ENCODE measurements at regions of chr15 and their contacts with region 1.

Region 1: DNA sequence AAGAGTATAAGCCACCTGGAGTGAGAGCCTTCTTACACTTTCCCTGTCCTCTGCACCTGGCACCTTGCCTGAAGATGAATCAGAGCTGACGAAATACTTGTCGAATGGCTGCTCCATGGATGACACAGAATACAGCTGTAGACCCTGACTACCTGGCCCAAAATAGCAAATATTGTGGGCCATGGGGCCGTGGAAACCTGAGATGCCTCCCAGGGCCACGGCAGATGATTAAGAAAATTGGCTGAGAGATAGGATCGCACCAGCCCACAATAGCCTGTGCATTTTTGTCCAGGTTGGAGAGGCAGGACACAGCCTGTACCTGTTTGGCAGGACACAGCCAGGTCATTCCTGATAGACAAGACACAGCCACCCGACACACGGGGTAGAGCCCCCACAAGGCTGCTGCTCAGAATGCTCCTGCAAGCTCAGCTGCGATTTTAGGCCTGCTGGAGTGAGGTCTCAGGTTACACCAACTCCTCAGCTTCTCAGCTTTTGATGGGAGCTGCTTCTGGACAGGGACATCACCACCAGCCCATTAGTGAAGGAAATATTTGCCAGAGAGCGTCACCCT is 22.9 kb upstream of the TPM1 start:
- DNase-seq: peak; percentile 91 to 94
- H3K4me3 ChIP-seq: no peak overlapping the region; the same call in 1 of the 2 replicates
- H3K27ac ChIP-seq: peak overlapping the region; percentile 75
- H3K4me1 ChIP-seq: peaks cover 51% of the 10 kb centered on the region
- H3K27me3 ChIP-seq: no peaks in the 10 kb centered on the region
- CTCF ChIP-seq: no peak

Region 2: DNA sequence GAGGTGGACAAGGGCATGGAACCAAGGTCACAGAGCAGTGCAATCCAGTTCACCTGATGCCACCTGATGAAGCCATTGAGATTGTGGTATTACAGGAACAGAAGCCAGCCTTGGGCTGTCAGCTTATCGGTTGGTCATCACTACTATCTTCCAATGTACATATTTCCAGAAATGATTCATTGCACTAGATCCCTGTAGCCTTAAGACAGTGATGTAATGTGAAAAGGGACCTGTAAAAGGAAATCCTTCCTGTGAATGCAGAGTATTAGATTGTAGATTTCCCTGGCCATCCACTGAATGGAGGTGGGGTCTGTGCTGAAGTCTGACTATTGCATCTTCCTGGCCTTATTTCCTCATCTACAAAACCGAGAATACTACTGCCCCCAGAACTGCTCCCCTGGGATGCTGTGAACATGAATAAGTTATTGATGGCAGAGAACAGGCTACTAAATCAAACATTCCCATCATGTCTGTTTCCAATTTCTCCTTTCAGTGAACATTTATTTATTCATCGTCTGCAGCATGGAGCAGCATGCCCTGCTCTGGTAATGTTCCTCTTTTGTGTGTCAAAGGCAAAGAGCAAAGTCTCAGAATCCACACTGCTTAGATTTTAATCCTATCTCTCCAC is 24.5 kb before region 1 on chr15:
- CTCF ChIA-PET with region 1: no interaction called
- POLR2A ChIA-PET with region 1: interaction called, 7 read pairs
- intact Hi-C with region 1: loop called (anchors 1 kb)
- DNase-seq: peak in 1 of 2 experiments; percentile 76
- H3K4me3 ChIP-seq: no peak overlapping the region
- H3K27ac ChIP-seq: no peak overlapping the region
- H3K4me1 ChIP-seq: peaks cover 41% of the 10 kb centered on the region
- H3K27me3 ChIP-seq: no peaks in the 10 kb centered on the region
- CTCF ChIP-seq: no peak

Measured in PC-9 (cell line).